Activated CD8-positive, alpha-beta memory T cell treated with anti-CD3 and anti-CD28 coated beads, Interleukin-2, amount 10 ng/mL, durations not matched to agents 7 days and 5 days (primary cell): ENCODE measurements at regions of chr1 and their contacts with region 1.

Region 1: DNA sequence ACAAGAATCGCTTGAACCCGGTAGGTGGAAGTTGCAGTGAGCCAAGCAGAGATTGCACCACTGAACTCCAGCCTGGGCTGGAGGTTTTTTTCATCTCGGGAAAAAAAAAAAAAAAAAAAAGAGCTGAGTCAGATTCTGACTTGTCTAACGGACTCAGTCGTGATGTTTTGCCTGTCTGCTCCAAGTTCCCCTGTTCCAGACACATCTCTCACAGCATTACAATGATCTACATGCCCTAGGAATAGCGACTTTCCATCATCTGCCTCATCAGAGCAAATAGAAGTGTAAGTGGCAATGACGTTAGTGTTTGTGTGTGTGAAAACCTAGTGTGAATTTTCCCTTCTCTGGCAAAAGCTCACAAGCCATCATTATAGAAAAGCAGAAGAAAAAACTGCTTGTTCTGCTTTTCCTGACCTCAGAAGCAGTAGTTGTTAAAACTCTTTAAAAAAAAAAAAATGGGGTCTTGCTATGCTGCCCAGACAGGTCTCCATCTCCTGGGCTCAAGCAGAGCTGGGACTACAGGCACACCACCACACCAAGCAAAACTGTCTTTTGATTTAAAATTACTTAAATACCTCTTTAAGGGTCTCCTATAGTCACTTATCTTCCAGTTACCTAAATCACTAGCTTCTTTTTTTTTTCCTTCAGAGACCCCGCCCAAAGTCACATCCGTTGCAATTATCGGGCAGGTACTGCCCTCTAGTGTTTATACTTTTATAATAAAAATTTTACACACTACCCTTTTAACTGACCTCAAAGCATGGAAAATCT is 37.3 kb downstream of the PLEKHO1 start:
- DNase-seq: no peak
- ATAC-seq: peak; percentile 67
- H3K4me3 Mint-ChIP-seq: peak overlapping the region; percentile 31
- H3K27ac Mint-ChIP-seq: peak overlapping the region; percentile 33
- H3K4me1 Mint-ChIP-seq: peaks cover 14% of the 10 kb centered on the region
- H3K27me3 Mint-ChIP-seq: peaks cover 4% of the 10 kb centered on the region

Region 2: DNA sequence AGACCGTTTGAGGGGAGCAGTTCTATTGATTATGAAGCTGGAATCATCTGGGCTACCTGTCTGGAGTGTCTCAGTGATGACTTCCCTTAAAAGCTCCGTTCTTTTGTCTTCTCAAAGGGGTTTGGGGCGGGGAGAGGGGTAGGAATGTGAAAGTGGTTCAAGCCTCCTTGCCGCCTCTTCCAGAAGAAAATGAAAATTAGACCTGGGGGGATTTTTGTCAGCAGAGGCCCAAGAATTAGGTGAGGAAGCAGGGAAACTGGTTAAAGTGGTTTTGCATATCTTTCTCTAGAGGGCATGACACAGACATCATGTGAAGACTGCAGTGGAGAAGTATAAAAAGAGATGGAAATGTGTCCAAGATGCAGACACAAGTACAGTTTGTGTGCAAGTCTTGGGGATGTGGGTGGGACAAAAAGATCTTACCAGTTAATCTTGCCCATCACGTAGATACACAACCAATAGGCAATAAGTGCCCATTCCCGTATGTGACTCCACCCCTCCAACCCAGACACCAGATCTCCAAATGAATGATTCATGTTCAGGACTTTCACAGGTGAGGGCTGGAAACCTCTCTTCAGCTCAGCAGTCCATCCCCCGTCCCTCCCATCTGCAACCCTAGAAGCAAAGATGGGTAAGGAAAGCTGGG is 249.8 kb before region 1 on chr1:
- CTCF ChIA-PET with region 1: no interaction called
- DNase-seq: no peak
- ATAC-seq: no peak
- H3K4me3 Mint-ChIP-seq: no peak overlapping the region
- H3K27ac Mint-ChIP-seq: peak overlapping the region; percentile 77
- H3K4me1 Mint-ChIP-seq: peaks cover 26% of the 10 kb centered on the region
- H3K27me3 Mint-ChIP-seq: no peaks in the 10 kb centered on the region

Region 3: DNA sequence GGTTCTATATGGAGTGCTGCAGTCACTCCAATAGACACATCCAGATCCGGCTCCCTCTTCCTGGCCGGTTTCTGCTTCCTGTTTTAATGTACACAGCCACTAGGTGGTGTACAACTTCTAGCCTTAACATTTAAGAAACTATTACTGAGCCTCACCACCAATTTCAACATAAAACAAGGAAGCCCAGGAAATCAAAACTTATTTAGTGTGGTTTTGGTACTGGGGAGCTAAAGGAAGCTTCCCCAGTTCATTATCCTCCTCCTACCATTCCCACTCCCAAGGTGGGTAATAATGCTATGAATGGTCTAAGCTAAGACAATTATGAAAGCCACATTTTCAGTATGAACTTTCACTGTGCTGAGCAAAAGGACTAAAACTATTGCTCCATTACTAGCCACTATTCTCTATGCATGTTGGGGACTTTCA is 224.8 kb before region 1 on chr1:
- CTCF ChIA-PET with region 1: interaction called, 23 read pairs
- DNase-seq: peak; percentile 59
- ATAC-seq: peak; percentile 86
- H3K4me3 Mint-ChIP-seq: no peak overlapping the region
- H3K27ac Mint-ChIP-seq: peak overlapping the region; percentile 44
- H3K4me1 Mint-ChIP-seq: peaks cover 14% of the 10 kb centered on the region
- H3K27me3 Mint-ChIP-seq: no peaks in the 10 kb centered on the region

Region 4: GRCh38 chr1:150067184-150068036 is 119.6 kb before region 1 on chr1 and contains the start of gene VPS45:
- CTCF ChIA-PET with region 1: interaction called, 80 read pairs
- DNase-seq: peak; percentile 94
- ATAC-seq: peak; percentile 95
- H3K4me3 Mint-ChIP-seq: peak within 1 kb of the TSS; percentile 97
- H3K27ac Mint-ChIP-seq: peak within 1 kb of the TSS; percentile 96
- H3K4me1 Mint-ChIP-seq: peaks cover 37% of the 10 kb centered on the region
- H3K27me3 Mint-ChIP-seq: no peaks in the 10 kb centered on the region
- total RNA-seq, gene VPS45: 34.7 to 35.9 TPM

Region 5: GRCh38 chr1:150072959-150073358 is 114.0 kb before region 1 on chr1:
- CTCF ChIA-PET with region 1: interaction called, 80 read pairs
- DNase-seq: no peak
- ATAC-seq: peak; percentile 64
- H3K4me3 Mint-ChIP-seq: no peak overlapping the region
- H3K27ac Mint-ChIP-seq: no peak overlapping the region
- H3K4me1 Mint-ChIP-seq: peaks cover 33% of the 10 kb centered on the region
- H3K27me3 Mint-ChIP-seq: no peaks in the 10 kb centered on the region

Region 6: GRCh38 chr1:150162862-150163706 is 23.9 kb before region 1 on chr1:
- CTCF ChIA-PET with region 1: interaction called, 21 read pairs
- DNase-seq: no peak
- ATAC-seq: no peak
- H3K4me3 Mint-ChIP-seq: no peak overlapping the region
- H3K27ac Mint-ChIP-seq: peak overlapping the region; percentile 50
- H3K4me1 Mint-ChIP-seq: peaks cover 68% of the 10 kb centered on the region
- H3K27me3 Mint-ChIP-seq: no peaks in the 10 kb centered on the region

Region 7: DNA sequence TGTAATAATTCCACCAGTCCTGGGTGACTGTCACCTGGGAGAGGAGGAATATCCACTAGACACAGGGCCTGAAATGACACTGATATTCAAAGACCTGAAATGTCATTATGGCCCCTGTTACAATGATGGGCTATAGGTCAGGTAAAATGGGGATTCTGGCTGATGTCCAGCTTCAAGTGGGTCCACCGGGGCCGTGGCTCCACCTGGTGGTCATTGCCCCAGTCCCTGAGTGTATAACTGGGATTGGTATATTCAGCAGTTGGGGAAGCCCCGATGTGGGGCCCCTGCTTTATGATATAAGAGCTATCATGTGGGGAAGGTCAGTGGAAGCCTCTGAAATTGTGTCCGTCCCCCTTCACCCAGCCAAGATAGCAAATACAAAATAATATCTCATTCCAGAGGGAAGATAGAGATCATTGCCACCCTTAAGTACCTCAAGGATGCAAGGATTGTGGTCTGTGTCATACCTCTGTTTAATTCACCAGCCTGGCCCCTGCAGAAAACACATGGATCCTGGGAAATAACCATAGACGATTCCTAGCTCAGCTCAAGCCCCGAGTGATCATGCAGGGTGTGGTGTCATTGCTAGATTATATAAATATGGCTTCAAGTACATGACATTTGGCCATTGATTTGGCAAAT is 17.9 kb before region 1 on chr1:
- CTCF ChIA-PET with region 1: interaction called, 21 read pairs
- DNase-seq: peak; percentile 76
- ATAC-seq: peak; percentile 70
- H3K4me3 Mint-ChIP-seq: no peak overlapping the region
- H3K27ac Mint-ChIP-seq: no peak overlapping the region
- H3K4me1 Mint-ChIP-seq: peaks cover 19% of the 10 kb centered on the region
- H3K27me3 Mint-ChIP-seq: no peaks in the 10 kb centered on the region

Region 8: GRCh38 chr1:150176593-150176992 is 10.4 kb before region 1 on chr1:
- CTCF ChIA-PET with region 1: interaction called, 20 read pairs
- DNase-seq: no peak
- ATAC-seq: no peak
- H3K4me3 Mint-ChIP-seq: no peak overlapping the region
- H3K27ac Mint-ChIP-seq: no peak overlapping the region
- H3K4me1 Mint-ChIP-seq: peaks cover 2% of the 10 kb centered on the region
- H3K27me3 Mint-ChIP-seq: no peaks in the 10 kb centered on the region

Region 9: GRCh38 chr1:150642296-150642695 is 455.3 kb after region 1 on chr1:
- CTCF ChIA-PET with region 1: no interaction called
- DNase-seq: no peak
- ATAC-seq: no peak
- H3K4me3 Mint-ChIP-seq: no peak overlapping the region
- H3K27ac Mint-ChIP-seq: no peak overlapping the region
- H3K4me1 Mint-ChIP-seq: no peaks in the 10 kb centered on the region
- H3K27me3 Mint-ChIP-seq: no peaks in the 10 kb centered on the region